ENCODE measurements at regions of chr17 and their contacts with region 1.

Region 1: GRCh38 chr17:18314731-18315561 is at the starts of genes SMCR8 and TOP3A:
- DNase-seq: peak; percentile 86 to 99 (median 98)
- ATAC-seq: peak; percentile 96
- H3K4me3 ChIP-seq: peak within 1 kb of the TSS; percentile 95
- H3K4me3 Mint-ChIP-seq: peak within 1 kb of the TSS; percentile 89 to 98 (median 93)
- H3K27ac ChIP-seq: peak within 1 kb of the TSS; percentile 93
- H3K27ac Mint-ChIP-seq: peak within 1 kb of the TSS; percentile 92 to 99 (median 95)
- H3K4me1 ChIP-seq: peaks cover 50 to 54% of the 10 kb centered on the region in 2 donors
- H3K4me1 Mint-ChIP-seq: peaks cover 61 to 88% (median 83%) of the 10 kb centered on the region in 7 donors
- H3K27me3 ChIP-seq: no peaks in the 10 kb centered on the region
- H3K27me3 Mint-ChIP-seq: peaks cover 0 to 2% (median 0%) of the 10 kb centered on the region in 5 donors
- total RNA-seq, gene SMCR8: 29.0 to 61.7 (median 52.1) TPM
- total RNA-seq, gene TOP3A: 39.0 to 74.9 (median 43.6) TPM

Region 2: GRCh38 chr17:16653209-16654041 is 1661.5 kb before region 1 on chr17 and contains the start of gene ZNF624:
- CTCF ChIA-PET with region 1: no interaction called
- POLR2A ChIA-PET with region 1: no interaction called
- intact Hi-C with region 1: loop called in 1 of 2 experiments (anchors 5 kb)
- DNase-seq: peak; percentile 75 to 87 (median 84)
- ATAC-seq: peak; percentile 98
- H3K4me3 ChIP-seq: peak within 1 kb of the TSS; percentile 76
- H3K4me3 Mint-ChIP-seq: peak within 1 kb of the TSS; percentile 81 to 93 (median 89)
- H3K27ac ChIP-seq: peak within 1 kb of the TSS; percentile 78
- H3K27ac Mint-ChIP-seq: peak within 1 kb of the TSS; percentile 7 to 91 (median 78)
- H3K4me1 ChIP-seq: peaks cover 0 to 11% of the 10 kb centered on the region in 2 donors
- H3K4me1 Mint-ChIP-seq: peaks cover 6 to 25% (median 21%) of the 10 kb centered on the region in 7 donors
- H3K27me3 ChIP-seq: no peaks in the 10 kb centered on the region
- H3K27me3 Mint-ChIP-seq: peaks cover 0 to 13% (median 0%) of the 10 kb centered on the region in 5 donors
- total RNA-seq, gene ZNF624: 3.8 to 11.4 (median 6.7) TPM

Region 3: DNA sequence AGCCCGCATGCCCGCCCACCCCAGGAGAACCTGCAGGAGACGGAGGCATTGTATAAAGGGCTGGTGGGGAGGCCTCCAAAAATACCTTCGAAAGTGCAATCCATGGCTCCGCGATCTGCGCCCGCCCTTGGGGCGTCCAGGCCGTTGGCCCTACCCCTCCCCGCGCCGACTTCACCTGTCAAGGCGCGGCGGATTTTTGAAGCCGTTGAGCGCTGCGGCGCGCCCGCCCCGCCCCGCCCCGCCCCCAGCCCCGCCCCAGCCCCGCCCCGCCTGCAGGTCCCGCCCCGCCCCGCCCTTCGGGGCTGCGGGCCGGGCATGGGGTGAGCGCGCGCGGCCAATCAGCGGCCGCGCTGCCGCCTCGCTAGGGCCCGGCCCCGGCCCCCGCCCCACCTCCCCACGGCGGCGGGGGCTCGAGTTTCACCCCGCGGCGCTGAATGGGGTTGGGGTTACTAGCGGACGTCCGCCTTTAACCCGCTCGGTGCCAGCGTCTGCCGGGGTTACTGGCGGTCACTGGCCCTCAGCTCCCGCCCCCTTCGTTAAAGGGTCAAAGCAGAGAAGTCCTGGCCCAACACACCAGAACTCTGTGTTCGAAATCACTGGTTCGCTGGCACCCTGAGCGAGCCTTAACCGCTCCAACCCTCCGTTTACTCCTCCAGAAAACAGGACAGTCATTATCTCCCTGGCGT is 491.4 kb before region 1 on chr17:
- CTCF ChIA-PET with region 1: no interaction called
- POLR2A ChIA-PET with region 1: no interaction called
- intact Hi-C with region 1: loop called in 1 of 2 experiments (anchors 10 kb)
- DNase-seq: peak; percentile 71 to 84 (median 81)
- ATAC-seq: peak; percentile 93
- H3K4me3 ChIP-seq: peak overlapping the region; percentile 68
- H3K4me3 Mint-ChIP-seq: peak overlapping the region; percentile 78 to 86 (median 84)
- H3K27ac ChIP-seq: peak overlapping the region; percentile 74
- H3K27ac Mint-ChIP-seq: peak overlapping the region; percentile 78 to 96 (median 93)
- H3K4me1 ChIP-seq: peaks cover 41 to 81% of the 10 kb centered on the region in 2 donors
- H3K4me1 Mint-ChIP-seq: peaks cover 72 to 95% (median 87%) of the 10 kb centered on the region in 7 donors
- H3K27me3 ChIP-seq: no peaks in the 10 kb centered on the region
- H3K27me3 Mint-ChIP-seq: no peaks in the 10 kb centered on the region

Region 4: DNA sequence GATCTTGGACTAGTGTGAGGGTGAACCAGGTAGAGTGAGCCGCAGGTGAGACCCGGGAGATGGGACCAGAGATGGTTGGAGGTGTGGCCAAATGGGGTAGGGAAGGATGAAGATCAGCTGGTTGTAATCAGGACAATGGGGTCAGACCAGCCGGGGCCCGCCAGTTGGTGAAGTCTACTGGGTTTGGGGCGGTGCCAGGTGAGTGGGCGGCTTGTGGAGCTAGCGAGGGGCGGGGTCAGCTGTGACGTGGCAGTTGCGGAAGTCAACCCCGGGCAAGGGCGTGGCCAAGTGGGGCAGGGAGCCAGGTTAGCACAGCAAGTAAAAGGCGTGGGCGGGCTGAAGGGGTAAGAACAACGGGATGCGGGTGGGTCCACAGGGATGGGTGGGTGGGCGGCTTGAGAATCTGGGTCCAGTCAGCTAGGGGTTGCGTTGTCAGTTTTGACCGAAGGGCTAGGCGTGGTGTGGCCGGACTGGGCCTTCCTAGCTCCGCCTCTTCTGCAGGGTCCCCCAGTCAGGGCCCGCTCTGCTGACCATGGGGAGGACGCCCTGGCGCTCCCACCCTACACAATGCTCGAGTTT is 156.8 kb before region 1 on chr17:
- CTCF ChIA-PET with region 1: no interaction called
- POLR2A ChIA-PET with region 1: no interaction called
- intact Hi-C with region 1: loop called in 1 of 2 experiments (anchors 10 kb)
- DNase-seq: peak; percentile 89 to 94 (median 93)
- ATAC-seq: peak; percentile 96
- H3K4me3 ChIP-seq: peak overlapping the region; percentile 78
- H3K4me3 Mint-ChIP-seq: peak overlapping the region; percentile 78 to 93 (median 85)
- H3K27ac ChIP-seq: peak overlapping the region; percentile 64
- H3K27ac Mint-ChIP-seq: peak overlapping the region; percentile 89 to 94 (median 91)
- H3K4me1 ChIP-seq: peaks cover 6 to 7% of the 10 kb centered on the region in 2 donors
- H3K4me1 Mint-ChIP-seq: peaks cover 0 to 19% (median 14%) of the 10 kb centered on the region in 7 donors
- H3K27me3 ChIP-seq: no peaks in the 10 kb centered on the region
- H3K27me3 Mint-ChIP-seq: peaks cover 0 to 2% (median 0%) of the 10 kb centered on the region in 5 donors

Region 5: GRCh38 chr17:18176176-18176575 is 138.8 kb before region 1 on chr17:
- CTCF ChIA-PET with region 1: no interaction called
- POLR2A ChIA-PET with region 1: no interaction called
- intact Hi-C with region 1: no loop called
- DNase-seq: no peak
- ATAC-seq: peak; percentile 68
- H3K4me3 ChIP-seq: no peak overlapping the region
- H3K4me3 Mint-ChIP-seq: no peak overlapping the region
- H3K27ac ChIP-seq: no peak overlapping the region
- H3K27ac Mint-ChIP-seq: no peak overlapping the region
- H3K4me1 ChIP-seq: no peaks in the 10 kb centered on the region
- H3K4me1 Mint-ChIP-seq: peaks cover 0 to 8% (median 1%) of the 10 kb centered on the region in 7 donors
- H3K27me3 ChIP-seq: no peaks in the 10 kb centered on the region
- H3K27me3 Mint-ChIP-seq: no peaks in the 10 kb centered on the region

Region 6: GRCh38 chr17:18225121-18225566 is 89.8 kb before region 1 on chr17:
- CTCF ChIA-PET with region 1: no interaction called
- POLR2A ChIA-PET with region 1: no interaction called
- intact Hi-C with region 1: loop called (anchors 1 kb)
- DNase-seq: peak; percentile 92 to 98 (median 94)
- ATAC-seq: peak; percentile 99
- H3K4me3 ChIP-seq: peak overlapping the region; percentile 46
- H3K4me3 Mint-ChIP-seq: peak overlapping the region; percentile 54 to 94 (median 68)
- H3K27ac ChIP-seq: peak overlapping the region; percentile 34
- H3K27ac Mint-ChIP-seq: peak overlapping the region in 4 of 9 donors; percentile 64 to 80 (median 77)
- H3K4me1 ChIP-seq: peaks cover 7 to 13% of the 10 kb centered on the region in 2 donors
- H3K4me1 Mint-ChIP-seq: peaks cover 24 to 30% (median 27%) of the 10 kb centered on the region in 7 donors
- H3K27me3 ChIP-seq: no peaks in the 10 kb centered on the region
- H3K27me3 Mint-ChIP-seq: no peaks in the 10 kb centered on the region

Region 7: GRCh38 chr17:18260332-18261144 is 54.4 kb before region 1 on chr17 and contains the start of gene MIEF2:
- CTCF ChIA-PET with region 1: no interaction called
- POLR2A ChIA-PET with region 1: interaction called, 5 read pairs
- intact Hi-C with region 1: loop called (anchors 1 kb)
- DNase-seq: peak; percentile 80 to 92 (median 91)
- ATAC-seq: peak; percentile 91
- H3K4me3 ChIP-seq: peak within 1 kb of the TSS; percentile 84
- H3K4me3 Mint-ChIP-seq: peak within 1 kb of the TSS; percentile 78 to 96 (median 84)
- H3K27ac ChIP-seq: peak within 1 kb of the TSS; percentile 95
- H3K27ac Mint-ChIP-seq: peak within 1 kb of the TSS; percentile 77 to 92 (median 84)
- H3K4me1 ChIP-seq: peaks cover 29 to 47% of the 10 kb centered on the region in 2 donors
- H3K4me1 Mint-ChIP-seq: peaks cover 11 to 57% (median 37%) of the 10 kb centered on the region in 7 donors
- H3K27me3 ChIP-seq: no peaks in the 10 kb centered on the region
- H3K27me3 Mint-ChIP-seq: no peaks in the 10 kb centered on the region
- total RNA-seq, gene MIEF2: 6.5 to 22.5 (median 15.1) TPM

Measured in naive thymus-derived CD4-positive, alpha-beta T cell (primary cell).